Esophagus muscularis mucosa (tissue), 4 donors: ENCODE measurements at regions of chr9 and their contacts with region 1.

Region 1: DNA sequence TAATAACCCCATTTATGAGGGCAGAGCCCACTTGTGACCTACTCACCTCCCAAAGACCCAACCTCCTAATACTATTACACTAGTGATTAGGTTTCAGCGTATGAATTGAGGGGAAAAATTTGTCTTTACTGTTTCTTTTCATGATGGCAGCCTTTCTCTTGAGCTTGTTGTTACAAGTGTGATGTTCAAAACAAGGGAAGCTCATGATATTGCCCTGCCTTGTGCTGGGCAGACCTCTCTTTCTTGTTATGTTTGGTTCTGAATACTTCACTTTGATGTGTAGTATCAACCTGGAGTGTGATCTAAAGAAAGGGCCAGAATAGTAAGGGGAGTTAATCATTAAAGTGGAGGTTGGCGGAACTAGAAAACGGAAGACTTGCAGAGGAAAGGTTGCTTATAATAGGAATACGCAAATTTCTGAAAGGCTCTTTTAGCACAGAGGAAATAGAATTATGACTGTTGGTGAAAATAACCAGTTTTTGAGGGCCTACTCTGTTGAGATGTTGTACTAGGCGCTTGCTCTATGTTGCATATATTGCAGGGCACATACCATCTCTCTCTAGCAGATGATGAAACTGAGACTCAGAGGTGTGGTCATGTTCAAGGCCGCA is 68.2 kb downstream of the MELK start:
- DNase-seq: no peak
- H3K4me3 ChIP-seq: no peak overlapping the region
- H3K27ac ChIP-seq: no peak overlapping the region
- H3K4me1 ChIP-seq: no peaks in the 10 kb centered on the region
- H3K27me3 ChIP-seq: no peaks in the 10 kb centered on the region
- CTCF ChIP-seq: no peak
- EP300 ChIP-seq: no peak
- POLR2A ChIP-seq: no peak

Region 2: DNA sequence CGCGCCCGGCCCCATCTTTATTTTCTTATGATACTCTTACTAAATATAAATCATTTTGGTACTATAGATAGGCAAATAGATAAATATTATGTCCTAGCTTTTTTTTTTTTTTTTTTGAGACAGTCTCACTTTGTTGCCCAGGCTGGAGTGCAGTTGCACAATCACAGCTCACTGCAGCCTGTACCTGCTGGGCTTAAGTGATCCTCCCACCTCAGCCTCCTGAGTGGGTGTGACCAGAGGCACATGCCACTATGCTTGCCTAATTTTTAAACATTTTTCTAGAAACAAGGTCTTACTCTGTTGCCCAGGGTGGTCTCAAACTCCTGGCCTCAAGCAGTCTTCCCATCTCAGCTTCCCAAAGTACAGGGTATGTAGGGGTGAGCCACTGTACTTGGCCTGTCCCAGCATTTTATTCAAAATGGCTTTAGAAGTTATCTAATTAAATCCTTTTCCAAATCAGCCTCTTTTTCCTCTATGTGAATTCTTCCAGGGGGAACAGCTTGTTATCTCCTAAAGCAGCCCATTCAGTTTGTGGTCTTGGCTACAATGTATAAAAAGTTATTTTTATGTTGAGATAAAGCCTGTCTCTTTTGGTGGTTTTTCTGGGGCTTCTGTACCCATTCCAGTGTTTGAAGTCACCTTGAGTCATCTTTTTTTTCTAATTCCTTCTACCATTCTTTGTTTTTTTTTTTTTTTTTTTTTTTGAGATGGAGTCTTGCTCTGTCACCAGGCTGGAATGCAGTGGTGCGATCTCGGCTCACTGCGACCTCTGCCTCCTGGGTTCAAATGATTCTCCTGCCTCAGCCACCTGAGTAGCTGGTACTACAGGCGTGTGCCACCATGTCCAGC is 56.0 kb before region 1 on chr9:
- intact Hi-C with region 1: loop called (anchors 10 kb)
- DNase-seq: no peak
- H3K4me3 ChIP-seq: no peak overlapping the region
- H3K27ac ChIP-seq: no peak overlapping the region
- H3K4me1 ChIP-seq: no peaks in the 10 kb centered on the region
- H3K27me3 ChIP-seq: no peaks in the 10 kb centered on the region
- CTCF ChIP-seq: no peak
- EP300 ChIP-seq: no peak
- POLR2A ChIP-seq: no peak